Psoas muscle (tissue), 8 donors: ENCODE measurements at regions of chr1 and their contacts with region 1.

Region 1: GRCh38 chr1:204927673-204928641 is 57.3 kb downstream of the NFASC start:
- DNase-seq: no peak
- ATAC-seq: no peak
- H3K4me3 ChIP-seq: no peak overlapping the region
- H3K27ac ChIP-seq: no peak overlapping the region
- H3K4me1 ChIP-seq: no peaks in the 10 kb centered on the region
- H3K27me3 ChIP-seq: peaks cover 0 to 3% (median 3%) of the 10 kb centered on the region in 3 donors
- CTCF ChIP-seq: no peak

Region 2: GRCh38 chr1:204714861-204715511 is 213.0 kb before region 1 on chr1:
- intact Hi-C with region 1: no loop called
- DNase-seq: no peak
- ATAC-seq: no peak
- H3K4me3 ChIP-seq: no peak overlapping the region
- H3K27ac ChIP-seq: no peak overlapping the region
- H3K4me1 ChIP-seq: no peaks in the 10 kb centered on the region
- H3K27me3 ChIP-seq: peaks cover 0 to 32% (median 0%) of the 10 kb centered on the region in 3 donors
- CTCF ChIP-seq: no peak

Region 3: DNA sequence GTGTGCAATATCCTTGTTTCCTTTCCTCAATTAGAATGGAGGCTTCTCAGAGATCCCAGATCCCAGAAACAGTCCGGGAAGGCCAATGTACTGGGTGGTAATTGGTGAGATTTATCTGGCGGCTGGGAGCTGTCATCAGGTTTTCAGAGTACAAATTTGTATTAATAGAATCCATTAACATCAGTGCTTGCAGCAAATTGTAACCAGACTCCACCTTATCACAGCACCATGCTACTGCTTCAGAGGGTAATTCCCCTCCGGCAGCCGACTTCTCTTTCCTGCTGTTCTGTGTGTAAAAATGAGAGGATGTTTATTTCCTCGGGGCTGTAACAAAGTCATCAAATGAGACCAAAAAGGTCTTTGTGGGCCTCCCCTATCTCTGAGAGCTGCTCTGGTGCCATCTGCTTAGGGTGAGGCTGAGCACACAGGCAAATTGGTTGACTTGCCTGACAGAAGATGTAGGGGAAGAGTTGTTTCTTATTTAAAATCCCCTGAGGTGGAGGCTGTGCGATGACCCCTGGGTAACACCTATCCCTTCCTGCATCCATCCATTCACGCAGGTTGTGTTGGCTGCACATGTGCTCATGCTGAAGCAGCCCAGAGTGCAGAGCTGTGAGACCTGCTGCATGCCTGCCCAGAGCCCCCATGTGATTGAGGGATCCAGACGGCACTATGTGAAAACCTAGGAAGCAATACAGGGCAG is 38.1 kb before region 1 on chr1:
- intact Hi-C with region 1: loop called in 1 of 2 experiments (anchors 5 kb)
- DNase-seq: no peak
- ATAC-seq: no peak
- H3K4me3 ChIP-seq: no peak overlapping the region
- H3K27ac ChIP-seq: no peak overlapping the region
- H3K4me1 ChIP-seq: no peaks in the 10 kb centered on the region
- H3K27me3 ChIP-seq: no peaks in the 10 kb centered on the region
- CTCF ChIP-seq: no peak

Region 4: GRCh38 chr1:205693421-205693991 is 765.5 kb after region 1 on chr1:
- intact Hi-C with region 1: no loop called
- DNase-seq: no peak
- ATAC-seq: no peak
- H3K4me3 ChIP-seq: no peak overlapping the region
- H3K27ac ChIP-seq: no peak overlapping the region
- H3K4me1 ChIP-seq: no peaks in the 10 kb centered on the region
- H3K27me3 ChIP-seq: no peaks in the 10 kb centered on the region
- CTCF ChIP-seq: no peak